ENCODE measurements at regions of chr1 and their contacts with region 1.

Region 1: DNA sequence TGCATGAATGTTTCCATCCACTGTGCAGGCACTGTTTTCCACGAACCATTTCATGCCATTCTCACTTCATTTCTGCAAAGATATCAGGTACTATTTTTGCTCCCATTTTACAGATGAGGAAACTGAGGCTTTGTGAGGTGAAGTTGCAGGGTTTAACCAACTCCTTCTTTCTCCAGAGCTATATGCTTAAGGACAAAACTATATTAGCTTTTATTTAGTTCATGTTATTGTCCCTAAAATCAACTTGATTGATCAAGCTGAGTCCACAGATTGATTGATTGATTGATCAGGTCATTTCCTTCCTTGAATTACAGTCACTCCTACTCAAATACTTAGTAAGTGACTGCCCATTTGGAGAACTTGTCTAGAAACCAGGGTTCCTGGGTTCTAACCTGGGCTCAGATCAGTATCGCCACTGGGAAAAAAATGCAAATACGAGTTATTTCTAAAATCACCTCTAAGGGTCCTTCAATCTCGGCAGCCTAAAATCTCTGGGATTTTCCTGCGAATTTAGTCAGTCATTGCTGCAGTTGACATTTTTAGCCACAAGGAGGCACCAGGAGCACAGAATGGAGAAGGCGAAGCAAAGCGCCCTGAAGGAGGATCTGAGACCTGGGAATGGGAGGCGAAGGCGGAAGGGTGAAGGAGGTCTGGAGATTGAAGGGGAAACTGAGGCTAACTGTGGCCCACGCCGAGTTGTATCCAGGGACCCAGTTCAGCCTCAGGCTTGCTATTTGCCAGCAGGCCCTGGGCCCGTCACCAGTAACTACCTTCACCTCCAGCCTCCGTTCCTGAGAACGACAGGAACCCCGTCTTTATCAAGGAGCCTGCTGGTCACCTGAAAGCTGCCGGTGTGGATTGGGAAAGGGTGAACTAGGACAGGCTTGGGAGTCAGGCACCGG is 14.3 kb upstream of the MUL1 start:
- DNase-seq: peak; percentile 77 to 82
- H3K4me3 ChIP-seq: no peak overlapping the region
- H3K27ac ChIP-seq: no peak overlapping the region
- H3K4me1 ChIP-seq: no peaks in the 10 kb centered on the region
- H3K27me3 ChIP-seq: no peaks in the 10 kb centered on the region
- CTCF ChIP-seq: peak; percentile 73 to 91 (median 89)
- POLR2A ChIP-seq: no peak

Region 2: GRCh38 chr1:20634594-20635084 is 112.4 kb after region 1 on chr1:
- intact Hi-C with region 1: loop called (anchors 5 kb)
- DNase-seq: peak; percentile 81 to 83
- H3K4me3 ChIP-seq: peak overlapping the region in 1 of 3 donors; percentile 97
- H3K27ac ChIP-seq: peak overlapping the region in 2 of 3 donors; percentile 75 to 96
- H3K4me1 ChIP-seq: peaks cover 10 to 11% of the 10 kb centered on the region in 2 donors
- H3K27me3 ChIP-seq: no peaks in the 10 kb centered on the region
- CTCF ChIP-seq: no peak
- POLR2A ChIP-seq: no peak

Region 3: DNA sequence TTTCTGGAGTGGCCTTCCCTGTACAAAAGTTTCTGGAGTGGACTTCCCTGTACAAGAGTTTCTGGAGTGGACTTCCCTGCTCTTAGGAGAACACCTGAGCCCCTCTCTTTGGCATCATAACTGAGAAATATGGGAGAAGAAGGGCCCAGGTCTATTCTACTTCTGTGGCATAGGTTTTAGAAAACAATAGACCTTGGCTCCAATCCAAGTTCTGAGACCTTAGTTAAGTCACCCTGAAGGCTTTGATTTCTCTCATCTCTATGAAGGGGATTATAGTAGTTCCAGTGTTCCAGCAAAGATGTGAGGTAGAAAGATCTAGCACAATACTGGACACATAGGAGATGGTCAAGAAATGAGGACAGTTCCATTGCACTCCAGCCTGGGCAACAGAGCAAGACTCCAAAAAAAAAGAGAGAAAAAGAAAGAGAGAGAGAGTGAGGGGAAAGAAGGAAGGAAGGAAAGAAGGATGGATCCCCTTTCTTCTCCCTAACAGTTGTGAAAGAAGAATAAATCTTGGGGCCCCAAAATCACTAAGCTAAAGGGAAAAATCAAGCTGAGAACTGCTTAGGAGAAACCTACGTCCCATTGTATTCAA is 667.8 kb after region 1 on chr1:
- intact Hi-C with region 1: loop called (anchors 10 kb)
- DNase-seq: no peak
- H3K4me3 ChIP-seq: no peak overlapping the region
- H3K27ac ChIP-seq: no peak overlapping the region
- H3K4me1 ChIP-seq: peaks cover 6 to 7% of the 10 kb centered on the region in 2 donors
- H3K27me3 ChIP-seq: no peaks in the 10 kb centered on the region
- CTCF ChIP-seq: no peak
- POLR2A ChIP-seq: no peak